Natural killer cell (primary cell): ENCODE measurements at regions of chr11 and their contacts with region 1.

Region 1: GRCh38 chr11:114148013-114148382 is 88.5 kb downstream of the ZBTB16 start:
- DNase-seq: no peak
- ATAC-seq: peak; percentile 8 to 18 (median 11)
- H3K4me3 ChIP-seq: no peak overlapping the region
- H3K4me3 Mint-ChIP-seq: peak overlapping the region; percentile 82
- H3K27ac ChIP-seq: no peak overlapping the region
- H3K27ac Mint-ChIP-seq: peak overlapping the region; percentile 69 to 85
- H3K4me1 ChIP-seq: peaks cover 61% of the 10 kb centered on the region
- H3K4me1 Mint-ChIP-seq: peaks cover 89 to 93% of the 10 kb centered on the region in 2 donors
- H3K27me3 ChIP-seq: no peaks in the 10 kb centered on the region
- H3K27me3 Mint-ChIP-seq: no peaks in the 10 kb centered on the region
- CTCF ChIP-seq: no peak

Region 2: GRCh38 chr11:114159802-114160632 is 12.0 kb after region 1 on chr11:
- intact Hi-C with region 1: loop called (anchors 2 kb)
- DNase-seq: peak; percentile 98 to 99
- ATAC-seq: peak; percentile 92 to 97 (median 95)
- H3K4me3 ChIP-seq: peak overlapping the region; percentile 8
- H3K4me3 Mint-ChIP-seq: peak overlapping the region; percentile 86
- H3K27ac ChIP-seq: peak overlapping the region; percentile 73
- H3K27ac Mint-ChIP-seq: peak overlapping the region; percentile 85 to 92
- H3K4me1 ChIP-seq: peaks cover 94% of the 10 kb centered on the region
- H3K4me1 Mint-ChIP-seq: peaks cover 96 to 98% of the 10 kb centered on the region in 2 donors
- H3K27me3 ChIP-seq: no peaks in the 10 kb centered on the region
- H3K27me3 Mint-ChIP-seq: no peaks in the 10 kb centered on the region
- CTCF ChIP-seq: no peak

Region 3: GRCh38 chr11:114366331-114367243 is 218.6 kb after region 1 on chr11:
- intact Hi-C with region 1: no loop called
- DNase-seq: no peak
- ATAC-seq: no peak
- H3K4me3 ChIP-seq: no peak overlapping the region
- H3K4me3 Mint-ChIP-seq: no peak overlapping the region
- H3K27ac ChIP-seq: no peak overlapping the region
- H3K27ac Mint-ChIP-seq: no peak overlapping the region
- H3K4me1 ChIP-seq: no peaks in the 10 kb centered on the region
- H3K4me1 Mint-ChIP-seq: no peaks in the 10 kb centered on the region
- H3K27me3 ChIP-seq: no peaks in the 10 kb centered on the region
- H3K27me3 Mint-ChIP-seq: peaks cover 9 to 51% of the 10 kb centered on the region in 2 donors
- CTCF ChIP-seq: no peak